CD4-positive, alpha-beta memory T cell (primary cell): ENCODE measurements at regions of chr11 and their contacts with region 1.

Region 1: DNA sequence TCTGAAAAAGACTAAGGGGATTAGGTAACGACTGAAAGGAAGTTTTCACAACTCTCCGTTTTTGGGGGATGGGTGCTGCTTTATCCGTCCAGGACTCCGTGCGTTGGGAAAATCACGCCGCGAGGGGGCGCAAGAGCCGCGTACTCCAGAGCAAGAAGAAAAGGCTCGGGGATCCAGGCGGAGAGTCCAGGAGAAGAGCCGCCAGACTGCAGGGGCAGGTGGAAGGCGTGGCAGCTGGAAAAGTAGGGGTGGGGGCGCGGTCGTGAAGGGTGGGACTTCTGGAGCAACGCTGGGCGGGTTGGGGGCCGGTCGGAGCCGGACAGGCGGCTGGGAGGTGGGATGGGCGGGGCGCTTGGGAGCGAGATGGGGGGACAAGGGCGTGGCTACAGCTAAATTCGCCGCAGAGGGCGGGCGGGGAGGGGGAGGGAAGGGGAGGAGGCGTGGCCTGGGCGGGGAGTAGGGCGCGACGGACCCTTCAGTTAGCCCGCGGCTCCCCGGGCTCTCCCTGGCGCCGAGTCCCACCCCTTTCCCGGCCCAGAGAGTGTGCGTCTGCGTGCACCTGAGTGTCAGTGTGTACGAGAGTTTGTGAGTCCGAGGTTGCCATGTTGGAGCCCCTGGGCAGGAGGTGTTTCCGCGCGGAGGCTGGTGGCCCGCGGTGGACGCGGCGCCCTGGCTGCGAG is 613 bp upstream of the ARHGEF17 start:
- DNase-seq: peak; percentile 82 to 87 (median 85)
- H3K4me3 ChIP-seq: peak overlapping the region; percentile 23 to 58
- H3K4me3 Mint-ChIP-seq: peak overlapping the region; percentile 84 to 96 (median 94)
- H3K27ac ChIP-seq: no peak overlapping the region
- H3K27ac Mint-ChIP-seq: peak overlapping the region in 6 of 7 donors; percentile 10 to 88 (median 54)
- H3K4me1 ChIP-seq: peaks cover 8% of the 10 kb centered on the region
- H3K4me1 Mint-ChIP-seq: peaks cover 6 to 18% (median 11%) of the 10 kb centered on the region in 4 donors
- H3K27me3 ChIP-seq: no peaks in the 10 kb centered on the region
- H3K27me3 Mint-ChIP-seq: peaks cover 7 to 19% of the 10 kb centered on the region in 2 donors

Region 2: GRCh38 chr11:73204711-73205121 is 102.7 kb before region 1 on chr11:
- CTCF ChIA-PET with region 1: no interaction called
- POLR2A ChIA-PET with region 1: no interaction called
- intact Hi-C with region 1: no loop called
- DNase-seq: no peak
- H3K4me3 ChIP-seq: no peak overlapping the region
- H3K4me3 Mint-ChIP-seq: no peak overlapping the region
- H3K27ac ChIP-seq: no peak overlapping the region
- H3K27ac Mint-ChIP-seq: peak overlapping the region in 2 of 7 donors; percentile 70 to 76
- H3K4me1 ChIP-seq: no peaks in the 10 kb centered on the region
- H3K4me1 Mint-ChIP-seq: no peaks in the 10 kb centered on the region
- H3K27me3 ChIP-seq: no peaks in the 10 kb centered on the region
- H3K27me3 Mint-ChIP-seq: peaks cover 4 to 19% of the 10 kb centered on the region in 2 donors

Region 3: GRCh38 chr11:73236854-73237253 is 70.6 kb before region 1 on chr11:
- CTCF ChIA-PET with region 1: no interaction called
- POLR2A ChIA-PET with region 1: no interaction called
- intact Hi-C with region 1: no loop called
- DNase-seq: peak in 1 of 5 donors; percentile 1
- H3K4me3 ChIP-seq: no peak overlapping the region
- H3K4me3 Mint-ChIP-seq: no peak overlapping the region
- H3K27ac ChIP-seq: no peak overlapping the region
- H3K27ac Mint-ChIP-seq: no peak overlapping the region
- H3K4me1 ChIP-seq: no peaks in the 10 kb centered on the region
- H3K4me1 Mint-ChIP-seq: no peaks in the 10 kb centered on the region
- H3K27me3 ChIP-seq: no peaks in the 10 kb centered on the region
- H3K27me3 Mint-ChIP-seq: peaks cover 2 to 3% of the 10 kb centered on the region in 2 donors

Region 4: DNA sequence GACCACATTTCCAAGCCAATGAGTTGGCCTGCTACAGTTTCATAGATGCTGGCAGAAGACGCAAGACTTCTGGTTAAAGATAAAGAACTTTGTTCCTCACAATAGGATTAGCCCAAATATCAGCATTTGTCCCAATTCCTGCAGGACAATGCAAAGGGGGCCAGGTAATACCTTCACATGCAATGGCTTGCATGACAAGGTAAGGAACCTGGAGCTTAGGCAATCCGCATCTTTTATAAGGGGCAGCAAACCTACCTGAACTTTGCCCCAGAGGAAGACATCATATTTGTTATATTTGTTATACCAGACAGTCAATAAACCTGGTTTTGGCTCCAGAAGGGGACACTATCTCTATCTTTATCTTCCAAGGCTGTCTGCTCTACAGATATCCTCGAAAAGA is 30.0 kb before region 1 on chr11:
- CTCF ChIA-PET with region 1: no interaction called
- POLR2A ChIA-PET with region 1: no interaction called
- intact Hi-C with region 1: no loop called
- DNase-seq: no peak
- H3K4me3 ChIP-seq: no peak overlapping the region
- H3K4me3 Mint-ChIP-seq: no peak overlapping the region
- H3K27ac ChIP-seq: no peak overlapping the region
- H3K27ac Mint-ChIP-seq: no peak overlapping the region
- H3K4me1 ChIP-seq: no peaks in the 10 kb centered on the region
- H3K4me1 Mint-ChIP-seq: no peaks in the 10 kb centered on the region
- H3K27me3 ChIP-seq: no peaks in the 10 kb centered on the region
- H3K27me3 Mint-ChIP-seq: peaks cover 4% of the 10 kb centered on the region in 2 donors

Region 5: DNA sequence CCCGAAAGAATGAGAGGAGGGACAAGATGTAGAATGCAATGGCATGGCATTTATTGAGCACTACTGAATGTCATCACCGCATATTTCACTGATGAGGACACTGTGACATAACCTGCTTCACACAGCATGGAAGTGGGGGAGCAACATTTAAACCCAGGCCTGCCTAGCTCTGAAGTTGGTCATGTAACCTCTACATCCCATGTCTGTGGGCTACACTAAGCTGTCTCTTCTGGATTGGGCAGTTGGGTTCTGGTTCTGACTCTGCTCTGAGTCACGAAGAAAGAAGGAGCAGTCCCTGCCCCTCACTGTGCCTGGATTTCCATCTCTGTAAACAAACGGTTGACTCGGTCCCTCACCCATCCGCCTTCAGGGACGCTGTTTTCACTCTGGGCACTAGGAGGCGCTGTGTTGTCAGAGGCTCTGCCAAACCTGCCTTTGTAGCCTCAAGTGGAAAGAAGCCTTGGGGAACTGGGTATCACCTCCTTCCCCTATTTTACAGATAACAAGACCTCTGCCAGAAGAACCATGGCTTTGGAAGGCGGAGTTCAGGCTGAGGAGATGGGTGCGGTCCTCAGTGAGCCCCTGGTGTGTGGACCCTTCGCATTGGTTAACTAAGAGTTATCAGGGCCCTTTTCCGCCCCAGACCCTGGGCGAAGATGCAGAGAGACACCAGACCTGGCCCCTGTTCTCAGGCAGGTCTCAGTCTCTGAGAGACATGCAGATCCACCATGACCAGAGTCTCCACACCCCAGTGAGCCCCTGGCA is 12.1 kb before region 1 on chr11:
- CTCF ChIA-PET with region 1: interaction called, 13 read pairs
- POLR2A ChIA-PET with region 1: no interaction called
- intact Hi-C with region 1: no loop called
- DNase-seq: peak; percentile 54 to 66 (median 59)
- H3K4me3 ChIP-seq: no peak overlapping the region
- H3K4me3 Mint-ChIP-seq: no peak overlapping the region
- H3K27ac ChIP-seq: no peak overlapping the region
- H3K27ac Mint-ChIP-seq: no peak overlapping the region
- H3K4me1 ChIP-seq: no peaks in the 10 kb centered on the region
- H3K4me1 Mint-ChIP-seq: peaks cover 0 to 2% (median 0%) of the 10 kb centered on the region in 4 donors
- H3K27me3 ChIP-seq: no peaks in the 10 kb centered on the region
- H3K27me3 Mint-ChIP-seq: peaks cover 9 to 10% of the 10 kb centered on the region in 2 donors

Region 6: DNA sequence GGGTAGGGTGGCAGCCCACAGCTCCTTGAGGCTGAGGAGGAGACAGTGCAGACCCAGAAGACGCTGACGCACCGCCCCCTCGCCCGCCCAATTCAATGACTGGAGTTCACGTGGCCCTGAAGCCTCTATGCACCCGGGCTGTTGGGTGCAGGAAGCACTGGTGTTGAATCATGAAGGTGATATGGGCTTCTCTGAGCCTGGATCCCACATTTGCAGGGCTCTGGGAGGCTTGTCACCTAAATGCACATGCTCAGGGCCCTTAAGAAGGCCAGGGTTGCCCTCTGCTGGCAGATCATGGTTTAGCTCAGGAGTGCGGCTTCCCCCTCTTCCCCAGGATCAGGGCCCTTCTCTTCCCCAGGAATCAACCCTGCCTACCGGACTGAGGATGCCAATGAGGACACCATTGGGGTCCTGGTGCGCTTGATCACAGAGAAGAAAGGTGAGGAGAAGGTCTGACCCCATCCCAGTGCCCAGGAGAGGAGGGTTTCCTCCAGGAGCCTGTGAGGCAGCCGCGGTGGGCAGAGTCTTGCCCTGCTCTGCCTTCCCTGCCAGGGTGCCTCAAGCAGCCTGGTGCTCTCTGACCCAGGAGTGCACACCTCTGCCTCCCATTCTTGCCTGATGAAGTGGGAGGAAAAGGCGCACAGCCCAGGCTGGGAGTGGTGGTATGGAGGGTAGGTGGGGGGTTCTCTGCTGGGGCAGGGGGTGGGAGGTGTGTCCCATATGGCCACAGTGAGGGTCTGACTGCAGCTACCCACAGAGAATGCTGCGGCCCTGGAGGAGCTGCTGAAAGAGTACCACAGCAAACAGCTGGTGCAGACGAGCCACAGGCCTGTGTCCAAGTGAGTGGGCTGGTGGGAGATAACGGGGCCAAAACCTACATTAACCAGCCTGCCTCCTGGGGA is 86.3 kb after region 1 on chr11:
- CTCF ChIA-PET with region 1: interaction called, 8 read pairs
- POLR2A ChIA-PET with region 1: no interaction called
- intact Hi-C with region 1: loop called (anchors 1 kb)
- DNase-seq: peak; percentile 61 to 69 (median 64)
- H3K4me3 ChIP-seq: no peak overlapping the region
- H3K4me3 Mint-ChIP-seq: no peak overlapping the region
- H3K27ac ChIP-seq: no peak overlapping the region
- H3K27ac Mint-ChIP-seq: peak overlapping the region in 6 of 7 donors; percentile 48 to 84 (median 68)
- H3K4me1 ChIP-seq: no peaks in the 10 kb centered on the region
- H3K4me1 Mint-ChIP-seq: peaks cover 0 to 11% (median 7%) of the 10 kb centered on the region in 4 donors
- H3K27me3 ChIP-seq: no peaks in the 10 kb centered on the region
- H3K27me3 Mint-ChIP-seq: no peaks in the 10 kb centered on the region